Caco-2 (cell line): ENCODE measurements at regions of chr13 and their contacts with region 1.

Region 1: DNA sequence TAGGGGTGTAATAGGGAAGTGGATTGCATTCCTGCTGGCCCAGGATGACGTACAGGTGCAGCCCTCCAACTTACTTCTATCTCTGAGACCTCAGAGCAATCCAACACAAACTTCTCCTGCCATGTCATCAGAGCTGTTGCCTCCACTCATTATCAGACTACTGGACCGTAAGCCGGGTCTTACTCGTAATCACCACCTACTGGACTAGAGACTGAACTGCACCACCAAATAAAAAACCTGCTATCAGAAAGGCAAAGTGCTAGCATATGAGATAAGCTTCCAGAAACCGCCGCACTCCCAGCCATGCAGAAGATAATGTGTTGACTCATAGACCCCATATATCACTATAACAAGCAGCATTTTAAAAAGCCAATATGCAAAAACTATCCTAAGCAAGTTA is 102.0 kb downstream of the SLITRK1 start:
- DNase-seq: peak; percentile 47 to 60
- H3K4me3 ChIP-seq: no peak overlapping the region
- H3K4me3 Mint-ChIP-seq: no peak overlapping the region
- H3K27ac Mint-ChIP-seq: no peak overlapping the region
- H3K4me1 ChIP-seq: no peaks in the 10 kb centered on the region
- H3K4me1 Mint-ChIP-seq: no peaks in the 10 kb centered on the region
- H3K27me3 ChIP-seq: no peaks in the 10 kb centered on the region
- H3K27me3 Mint-ChIP-seq: no peaks in the 10 kb centered on the region
- CTCF ChIP-seq: peak; percentile 42 to 62

Region 2: DNA sequence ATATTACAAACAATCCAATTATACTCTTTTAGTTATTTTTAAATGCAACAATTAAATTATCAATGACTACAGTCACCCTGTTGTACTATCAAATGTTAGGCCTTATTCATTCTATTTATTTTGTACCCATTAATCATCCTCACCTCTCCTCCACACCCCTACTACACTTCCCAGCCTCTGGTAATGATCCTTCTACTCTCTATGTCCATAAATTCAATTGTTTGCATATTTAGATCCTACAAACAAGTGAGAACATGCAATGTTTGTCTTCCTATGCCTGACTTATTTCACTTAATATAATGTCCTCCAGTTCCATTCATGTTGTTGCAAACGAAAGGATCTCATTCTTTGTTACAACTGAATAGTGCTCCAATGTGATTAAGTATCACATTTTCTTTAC is 1312.6 kb before region 1 on chr13:
- CTCF ChIA-PET with region 1: no interaction called
- POLR2A ChIA-PET with region 1: no interaction called
- intact Hi-C with region 1: no loop called
- DNase-seq: no peak
- H3K4me3 ChIP-seq: no peak overlapping the region
- H3K4me3 Mint-ChIP-seq: no peak overlapping the region
- H3K27ac Mint-ChIP-seq: no peak overlapping the region
- H3K4me1 ChIP-seq: no peaks in the 10 kb centered on the region
- H3K4me1 Mint-ChIP-seq: no peaks in the 10 kb centered on the region
- H3K27me3 ChIP-seq: no peaks in the 10 kb centered on the region
- H3K27me3 Mint-ChIP-seq: no peaks in the 10 kb centered on the region
- CTCF ChIP-seq: no peak

Region 3: GRCh38 chr13:83340170-83340569 is 440.1 kb before region 1 on chr13:
- CTCF ChIA-PET with region 1: no interaction called
- POLR2A ChIA-PET with region 1: no interaction called
- intact Hi-C with region 1: loop called (anchors 1 kb)
- DNase-seq: peak in 1 of 2 experiments; percentile 3
- H3K4me3 ChIP-seq: no peak overlapping the region
- H3K4me3 Mint-ChIP-seq: no peak overlapping the region
- H3K27ac Mint-ChIP-seq: no peak overlapping the region
- H3K4me1 ChIP-seq: no peaks in the 10 kb centered on the region
- H3K4me1 Mint-ChIP-seq: no peaks in the 10 kb centered on the region
- H3K27me3 ChIP-seq: no peaks in the 10 kb centered on the region
- H3K27me3 Mint-ChIP-seq: no peaks in the 10 kb centered on the region
- CTCF ChIP-seq: no peak

Region 4: GRCh38 chr13:83730671-83731070 is 49.6 kb before region 1 on chr13:
- CTCF ChIA-PET with region 1: no interaction called
- POLR2A ChIA-PET with region 1: no interaction called
- intact Hi-C with region 1: loop called (anchors 2 kb)
- DNase-seq: no peak
- H3K4me3 ChIP-seq: no peak overlapping the region
- H3K4me3 Mint-ChIP-seq: no peak overlapping the region
- H3K27ac Mint-ChIP-seq: no peak overlapping the region
- H3K4me1 ChIP-seq: no peaks in the 10 kb centered on the region
- H3K4me1 Mint-ChIP-seq: peaks cover 6% of the 10 kb centered on the region
- H3K27me3 ChIP-seq: no peaks in the 10 kb centered on the region
- H3K27me3 Mint-ChIP-seq: no peaks in the 10 kb centered on the region
- CTCF ChIP-seq: no peak